ENCODE measurements at regions of chr17 and their contacts with region 1.

Region 1: GRCh38 chr17:50361561-50362480 is 11.2 kb downstream of the MRPL27 start:
- DNase-seq: peak; percentile 61
- H3K4me3 ChIP-seq: no peak overlapping the region
- H3K27ac ChIP-seq: no peak overlapping the region
- H3K4me1 ChIP-seq: no peaks in the 10 kb centered on the region
- H3K27me3 ChIP-seq: no peaks in the 10 kb centered on the region
- CTCF ChIP-seq: peak; percentile 77 to 84
- POLR2A ChIP-seq: no peak

Region 2: GRCh38 chr17:50114849-50115357 is 246.9 kb before region 1 on chr17:
- CTCF ChIA-PET with region 1: no interaction called
- POLR2A ChIA-PET with region 1: no interaction called
- dilution Hi-C with region 1: no loop called
- intact Hi-C with region 1: no loop called
- DNase-seq: peak; percentile 68
- H3K4me3 ChIP-seq: no peak overlapping the region
- H3K27ac ChIP-seq: no peak overlapping the region
- H3K4me1 ChIP-seq: no peaks in the 10 kb centered on the region
- H3K27me3 ChIP-seq: no peaks in the 10 kb centered on the region
- CTCF ChIP-seq: peak; percentile 74 to 81
- POLR2A ChIP-seq: no peak

Region 3: GRCh38 chr17:50345432-50346312 is 16.1 kb before region 1 on chr17 and contains the start of gene XYLT2:
- CTCF ChIA-PET with region 1: interaction called, 24 read pairs
- POLR2A ChIA-PET with region 1: no interaction called
- dilution Hi-C with region 1: no loop called
- intact Hi-C with region 1: no loop called
- DNase-seq: peak; percentile 72
- H3K4me3 ChIP-seq: peak within 1 kb of the TSS; percentile 80 to 90 (median 84)
- H3K27ac ChIP-seq: peak within 1 kb of the TSS; percentile 11
- H3K4me1 ChIP-seq: peaks cover 28% of the 10 kb centered on the region
- H3K27me3 ChIP-seq: peaks cover 2 to 11% of the 10 kb centered on the region in 2 experiments
- CTCF ChIP-seq: no peak
- POLR2A ChIP-seq: peak; percentile 62
- total RNA-seq, gene XYLT2: 26.6 and 29.9 TPM in 2 replicates

Region 4: GRCh38 chr17:50372758-50373556 is 11.1 kb after region 1 on chr17 and contains the starts of genes EME1 and MRPL27:
- CTCF ChIA-PET with region 1: interaction called, 7 read pairs
- POLR2A ChIA-PET with region 1: no interaction called
- dilution Hi-C with region 1: no loop called
- intact Hi-C with region 1: loop called (anchors 1 kb)
- DNase-seq: peak; percentile 93
- H3K4me3 ChIP-seq: peak within 1 kb of the TSS; percentile 80 to 100 (median 91)
- H3K27ac ChIP-seq: peak within 1 kb of the TSS; percentile 89
- H3K4me1 ChIP-seq: peaks cover 15% of the 10 kb centered on the region
- H3K27me3 ChIP-seq: no peaks in the 10 kb centered on the region
- CTCF ChIP-seq: no peak
- POLR2A ChIP-seq: peak; percentile 89
- total RNA-seq, gene EME1: 7.3 and 9.1 TPM in 2 replicates
- total RNA-seq, gene MRPL27: 72.2 and 76.2 TPM in 2 replicates

Region 5: GRCh38 chr17:50501054-50501453 is 139.2 kb after region 1 on chr17:
- CTCF ChIA-PET with region 1: interaction called, 10 read pairs
- POLR2A ChIA-PET with region 1: no interaction called
- dilution Hi-C with region 1: no loop called
- intact Hi-C with region 1: no loop called
- DNase-seq: peak; percentile 42
- H3K4me3 ChIP-seq: no peak overlapping the region
- H3K27ac ChIP-seq: no peak overlapping the region
- H3K4me1 ChIP-seq: no peaks in the 10 kb centered on the region
- H3K27me3 ChIP-seq: peaks cover 3 to 6% of the 10 kb centered on the region in 2 experiments
- CTCF ChIP-seq: peak; percentile 28 to 29
- POLR2A ChIP-seq: no peak

Measured in endothelial cell of umbilical vein (primary cell).